HEK293 (cell line): ENCODE measurements at regions of chr2 and their contacts with region 1.

Region 1: GRCh38 chr2:188524519-188525113 is 232.9 kb downstream of the GULP1 start:
- H3K4me3 ChIP-seq: no peak overlapping the region
- H3K27ac ChIP-seq: no peak overlapping the region
- H3K4me1 ChIP-seq: no peaks in the 10 kb centered on the region
- CTCF ChIP-seq: 0 out of 2 replicates have a peak, but pooled peaks have one; percentile 11

Region 2: GRCh38 chr2:188561473-188561979 is 36.9 kb after region 1 on chr2:
- CTCF ChIA-PET with region 1: no interaction called
- POLR2A ChIA-PET with region 1: no interaction called
- H3K4me3 ChIP-seq: no peak overlapping the region
- H3K27ac ChIP-seq: no peak overlapping the region
- H3K4me1 ChIP-seq: no peaks in the 10 kb centered on the region
- CTCF ChIP-seq: no peak

Region 3: DNA sequence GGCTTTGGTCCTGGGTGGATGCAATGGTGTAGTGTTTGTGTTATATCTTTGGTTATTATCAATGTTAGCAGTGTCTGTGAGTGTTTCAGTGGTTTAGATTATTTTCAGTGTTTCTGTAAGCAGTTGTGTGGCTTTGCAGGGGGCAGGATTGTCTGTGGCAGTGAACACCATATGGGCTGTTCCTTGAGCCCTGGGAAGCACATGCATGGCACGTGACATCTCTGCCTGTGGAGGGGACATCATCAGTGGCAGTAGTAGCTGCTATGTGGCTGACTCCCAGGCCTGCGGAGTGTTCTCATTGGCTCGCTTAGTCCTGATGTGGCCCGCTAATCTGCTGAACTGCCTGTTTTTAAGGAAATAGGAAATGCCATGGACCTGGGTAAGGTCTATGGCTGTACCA is 94.5 kb after region 1 on chr2:
- CTCF ChIA-PET with region 1: no interaction called
- POLR2A ChIA-PET with region 1: no interaction called
- H3K4me3 ChIP-seq: no peak overlapping the region
- H3K27ac ChIP-seq: no peak overlapping the region
- H3K4me1 ChIP-seq: peaks cover 5% of the 10 kb centered on the region; the same call in 1 of the 2 replicates
- CTCF ChIP-seq: no peak

Region 4: DNA sequence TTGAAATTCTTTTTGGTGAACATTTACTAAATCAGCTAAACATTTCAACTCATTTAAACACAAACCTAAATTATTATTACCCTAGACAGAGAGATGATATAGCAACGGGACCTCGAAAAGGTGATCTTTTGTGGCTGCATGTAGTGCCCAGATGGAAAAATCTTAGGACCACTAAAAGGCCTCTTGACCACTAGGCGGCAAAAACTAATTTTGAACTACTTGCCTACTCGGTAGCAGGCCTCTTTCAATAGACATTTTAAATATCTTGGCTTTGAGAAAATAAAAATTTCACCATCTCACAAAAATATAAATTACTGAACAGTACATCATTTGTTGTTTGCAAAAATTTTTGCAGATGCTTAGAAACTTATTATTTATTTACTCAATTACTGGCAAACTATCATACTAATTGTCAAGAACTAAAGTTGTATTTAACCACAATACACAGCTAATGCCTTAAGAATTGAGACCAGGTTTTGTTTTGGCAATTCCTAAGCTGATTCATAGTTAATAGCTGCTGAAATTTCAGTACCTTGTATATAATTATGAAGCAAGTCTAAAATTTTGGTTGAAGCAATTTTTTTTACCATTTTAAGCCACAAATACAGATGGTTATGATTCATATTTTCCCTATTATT is 458.9 kb after region 1 on chr2:
- CTCF ChIA-PET with region 1: interaction called, 15 read pairs
- POLR2A ChIA-PET with region 1: interaction called, 3 read pairs
- H3K4me3 ChIP-seq: no peak overlapping the region
- H3K27ac ChIP-seq: no peak overlapping the region
- H3K4me1 ChIP-seq: peaks cover 3% of the 10 kb centered on the region
- CTCF ChIP-seq: no peak

Region 5: GRCh38 chr2:189287982-189288521 is 763.4 kb after region 1 on chr2:
- CTCF ChIA-PET with region 1: interaction called, 16 read pairs
- POLR2A ChIA-PET with region 1: no interaction called
- H3K4me3 ChIP-seq: no peak overlapping the region
- H3K27ac ChIP-seq: no peak overlapping the region
- H3K4me1 ChIP-seq: no peaks in the 10 kb centered on the region
- CTCF ChIP-seq: peak; percentile 72

Region 6: DNA sequence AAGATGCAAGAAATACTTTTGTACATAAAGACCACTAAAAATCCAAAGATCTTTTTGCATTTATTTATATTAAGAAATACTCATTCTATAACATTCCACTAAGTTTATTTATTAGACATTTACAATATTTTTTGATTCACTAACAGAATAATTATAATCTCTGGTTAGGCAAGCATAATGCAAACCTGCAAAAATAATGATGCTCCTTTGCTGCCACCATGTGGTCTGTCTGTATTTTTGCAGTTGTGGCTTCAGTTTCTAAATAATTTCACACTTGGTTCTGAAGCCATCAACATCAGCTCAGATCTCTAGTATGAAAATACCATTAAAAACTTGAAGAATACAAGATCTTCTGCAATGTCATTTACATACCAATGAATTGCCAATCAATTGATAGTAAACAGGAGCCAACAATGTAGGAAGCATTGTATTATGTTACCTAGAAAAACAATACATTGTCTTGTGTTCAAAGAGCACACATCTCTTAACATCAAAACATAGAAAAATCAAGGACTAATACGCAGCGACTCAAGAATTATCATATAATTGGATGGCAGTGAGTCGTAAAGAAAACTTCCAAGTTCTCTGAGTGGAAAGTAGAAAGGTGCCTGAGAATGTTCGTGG is 887.8 kb after region 1 on chr2:
- CTCF ChIA-PET with region 1: interaction called, 25 read pairs
- POLR2A ChIA-PET with region 1: no interaction called
- H3K4me3 ChIP-seq: no peak overlapping the region
- H3K27ac ChIP-seq: no peak overlapping the region
- H3K4me1 ChIP-seq: 0 out of 2 replicates have a peak, but pooled peaks cover under 1% of the 10 kb centered on the region
- CTCF ChIP-seq: 0 out of 2 replicates have a peak, but pooled peaks have one; percentile 26